ENCODE measurements at regions of chr20 and their contacts with region 1.

Region 1: GRCh38 chr20:62065669-62066338 is at the start of gene TAF4:
- DNase-seq: peak; percentile 70 to 89 (median 81)
- ATAC-seq: peak; percentile 85
- H3K4me3 ChIP-seq: peak within 1 kb of the TSS; percentile 64
- H3K4me3 Mint-ChIP-seq: peak within 1 kb of the TSS; percentile 82 to 92 (median 89)
- H3K27ac ChIP-seq: peak within 1 kb of the TSS; percentile 78
- H3K27ac Mint-ChIP-seq: peak within 1 kb of the TSS; percentile 89 to 97 (median 93)
- H3K4me1 ChIP-seq: peaks cover 23 to 29% of the 10 kb centered on the region in 2 donors
- H3K4me1 Mint-ChIP-seq: peaks cover 25 to 56% (median 50%) of the 10 kb centered on the region in 7 donors
- H3K27me3 ChIP-seq: no peaks in the 10 kb centered on the region
- H3K27me3 Mint-ChIP-seq: peaks cover 0 to 2% (median 0%) of the 10 kb centered on the region in 5 donors
- total RNA-seq, gene TAF4: 19.8 to 43.7 (median 23.7) TPM

Region 2: DNA sequence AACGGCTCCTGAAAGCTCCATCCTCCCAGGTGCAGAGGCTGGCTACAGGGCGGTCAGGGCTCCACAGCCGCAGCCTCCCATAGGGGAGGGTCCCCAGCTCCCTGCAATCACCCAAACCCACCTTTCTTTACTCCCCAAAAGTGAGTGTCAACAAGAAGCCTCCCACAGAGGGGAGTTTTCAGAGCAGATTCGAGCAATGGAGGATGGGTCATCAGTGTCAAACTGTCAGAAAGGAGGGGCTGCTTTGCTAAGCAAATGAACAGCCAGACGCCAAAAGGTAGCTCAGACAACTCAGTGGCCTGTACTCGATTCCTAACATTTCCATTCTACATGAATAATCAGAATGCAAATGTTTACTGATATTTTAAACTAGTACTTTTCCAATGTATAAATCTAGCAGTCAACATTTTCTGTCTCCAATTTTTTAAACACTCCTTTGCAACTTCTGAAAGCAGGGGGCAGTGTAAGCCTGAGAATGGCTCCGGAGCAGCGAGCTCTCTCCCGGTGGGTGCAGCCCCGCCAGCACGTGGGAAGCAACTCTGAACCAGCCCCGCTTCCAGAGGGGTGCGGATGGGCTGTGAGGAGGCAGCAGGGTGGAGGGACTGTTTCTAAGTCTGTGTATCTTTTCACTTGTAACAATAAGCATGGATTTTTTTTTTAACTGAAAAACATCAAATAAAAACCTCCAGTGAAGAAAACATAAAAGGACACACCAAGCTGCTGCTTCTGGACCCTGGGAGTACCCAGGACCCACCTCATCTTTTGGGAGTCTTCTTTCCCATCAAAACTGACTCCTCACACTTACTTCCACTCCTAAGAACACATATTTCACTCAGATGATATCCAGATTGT is 55.0 kb before region 1 on chr20:
- CTCF ChIA-PET with region 1: no interaction called
- POLR2A ChIA-PET with region 1: interaction called, 6 read pairs
- intact Hi-C with region 1: loop called (anchors 1 to 2 kb)
- DNase-seq: peak; percentile 36 to 70 (median 66)
- ATAC-seq: peak; percentile 81
- H3K4me3 ChIP-seq: no peak overlapping the region
- H3K4me3 Mint-ChIP-seq: peak overlapping the region in 1 of 10 donors; percentile 6
- H3K27ac ChIP-seq: no peak overlapping the region
- H3K27ac Mint-ChIP-seq: peak overlapping the region in 6 of 9 donors; percentile 6 to 65 (median 43)
- H3K4me1 ChIP-seq: peaks cover 0 to 4% of the 10 kb centered on the region in 2 donors
- H3K4me1 Mint-ChIP-seq: peaks cover 6 to 24% (median 10%) of the 10 kb centered on the region in 7 donors
- H3K27me3 ChIP-seq: no peaks in the 10 kb centered on the region
- H3K27me3 Mint-ChIP-seq: no peaks in the 10 kb centered on the region

Region 3: DNA sequence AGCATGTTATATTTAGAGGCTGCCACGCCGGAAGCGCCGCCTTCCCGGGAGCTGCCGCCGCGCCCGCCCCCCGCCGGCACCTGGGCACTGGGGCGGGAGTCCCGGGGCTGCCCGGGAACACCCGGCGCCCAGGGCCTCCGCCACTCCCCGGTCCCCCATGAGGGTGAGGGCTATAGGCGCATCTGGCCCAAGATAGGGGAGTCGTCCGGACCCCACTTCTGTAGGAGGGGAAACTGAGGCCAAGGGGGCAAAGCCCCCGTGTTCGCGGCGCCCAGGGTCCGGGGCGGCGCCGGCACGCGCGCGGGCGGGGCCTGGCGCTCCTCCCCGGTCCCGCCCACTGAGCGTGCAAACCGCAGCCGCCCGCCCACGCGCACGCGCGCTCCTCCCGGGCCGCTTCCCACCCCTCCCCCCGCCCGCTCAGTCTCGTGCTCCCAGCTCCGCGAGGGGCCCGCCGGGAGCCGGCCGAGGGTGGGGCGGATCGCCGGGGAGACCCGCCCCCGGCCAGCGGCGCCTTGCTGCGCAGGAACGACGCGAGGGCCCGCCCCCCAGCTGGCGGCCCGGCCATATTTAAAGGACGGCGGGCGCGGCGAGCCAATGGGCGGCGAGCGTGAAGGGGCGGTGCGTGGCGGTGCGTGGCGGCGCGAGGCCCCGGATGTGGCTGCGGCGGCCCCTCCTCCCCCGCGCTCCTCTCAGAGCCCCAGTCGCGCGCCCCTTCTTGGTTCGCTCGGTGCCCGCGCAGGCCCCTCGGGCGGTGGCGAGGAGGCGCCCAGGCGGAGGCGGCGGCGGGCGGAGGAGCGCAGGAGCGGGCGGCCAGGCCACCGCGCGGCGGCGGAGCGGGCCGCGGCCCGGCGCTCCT is 56.2 kb after region 1 on chr20 and contains the start of gene LSM14B:
- CTCF ChIA-PET with region 1: interaction called, 12 read pairs
- POLR2A ChIA-PET with region 1: interaction called, 109 read pairs
- intact Hi-C with region 1: loop called (anchors 1 kb)
- DNase-seq: peak; percentile 94 to 99 (median 96)
- ATAC-seq: peak; percentile 91
- H3K4me3 ChIP-seq: peak within 1 kb of the TSS; percentile 77
- H3K4me3 Mint-ChIP-seq: peak within 1 kb of the TSS; percentile 86 to 96 (median 92)
- H3K27ac ChIP-seq: peak within 1 kb of the TSS; percentile 81
- H3K27ac Mint-ChIP-seq: peak within 1 kb of the TSS; percentile 84 to 97 (median 95)
- H3K4me1 ChIP-seq: peaks cover 33 to 39% of the 10 kb centered on the region in 2 donors
- H3K4me1 Mint-ChIP-seq: peaks cover 42 to 71% (median 59%) of the 10 kb centered on the region in 7 donors
- H3K27me3 ChIP-seq: no peaks in the 10 kb centered on the region
- H3K27me3 Mint-ChIP-seq: no peaks in the 10 kb centered on the region
- total RNA-seq, gene LSM14B: 39.5 to 61.5 (median 41.9) TPM

Region 4: GRCh38 chr20:62143118-62143973 is 77.5 kb after region 1 on chr20 and contains the starts of genes PSMA7 and SS18L1:
- CTCF ChIA-PET with region 1: no interaction called
- POLR2A ChIA-PET with region 1: interaction called, 43 read pairs
- intact Hi-C with region 1: loop called (anchors 1 to 2 kb)
- DNase-seq: peak; percentile 79 to 90 (median 87)
- ATAC-seq: peak; percentile 91
- H3K4me3 ChIP-seq: peak within 1 kb of the TSS; percentile 65
- H3K4me3 Mint-ChIP-seq: peak within 1 kb of the TSS; percentile 89 to 98 (median 92)
- H3K27ac ChIP-seq: peak within 1 kb of the TSS; percentile 75
- H3K27ac Mint-ChIP-seq: peak within 1 kb of the TSS; percentile 80 to 97 (median 93)
- H3K4me1 ChIP-seq: peaks cover 28 to 36% of the 10 kb centered on the region in 2 donors
- H3K4me1 Mint-ChIP-seq: peaks cover 36 to 64% (median 55%) of the 10 kb centered on the region in 7 donors
- H3K27me3 ChIP-seq: no peaks in the 10 kb centered on the region
- H3K27me3 Mint-ChIP-seq: no peaks in the 10 kb centered on the region
- total RNA-seq, gene PSMA7: 125 to 301 (median 165) TPM
- total RNA-seq, gene SS18L1: 17.8 to 26.7 (median 22.6) TPM

Region 5: DNA sequence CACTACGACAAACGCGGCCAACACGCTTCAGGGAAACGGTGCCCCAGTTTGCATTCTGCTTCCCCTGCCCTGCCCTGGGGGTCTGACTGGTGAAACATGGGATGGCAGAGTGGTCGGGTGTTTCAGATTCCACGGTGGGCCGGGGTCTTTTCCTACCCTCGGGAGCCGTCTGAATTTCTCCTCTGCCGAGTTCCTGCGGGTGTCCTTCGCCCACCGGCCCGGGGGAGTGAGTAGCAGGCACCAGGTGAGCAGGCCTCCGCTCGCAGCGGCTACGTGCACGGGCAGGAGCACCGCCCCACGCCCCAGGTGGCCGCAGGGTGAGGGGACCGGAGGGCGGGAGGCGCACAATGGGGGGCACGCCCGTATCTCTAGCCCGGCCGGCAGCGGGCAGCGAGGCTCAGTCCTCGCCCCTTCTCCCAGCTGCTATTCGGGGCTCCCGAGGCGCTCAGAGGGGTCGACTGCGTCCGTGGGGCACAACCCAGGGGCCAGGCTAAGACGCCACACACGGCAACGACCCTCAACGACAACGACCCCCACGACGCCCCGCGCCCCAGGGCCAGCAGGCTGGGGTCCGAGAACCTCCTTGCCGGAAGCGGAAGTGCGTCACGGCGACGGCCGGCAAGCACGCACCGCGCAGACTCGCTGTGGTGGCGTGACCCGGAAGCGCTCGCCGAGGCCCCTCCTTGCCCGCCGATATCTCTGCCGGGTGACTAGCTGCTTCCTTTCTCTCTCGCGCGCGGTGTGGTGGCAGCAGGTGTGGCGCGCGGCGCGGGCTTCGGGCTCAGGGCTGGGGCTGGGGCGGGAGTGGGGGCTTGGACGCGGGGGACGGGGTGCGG is 320.8 kb after region 1 on chr20 and contains the start of gene RPS21:
- CTCF ChIA-PET with region 1: no interaction called
- POLR2A ChIA-PET with region 1: no interaction called
- intact Hi-C with region 1: loop called in 1 of 2 experiments (anchors 10 kb)
- DNase-seq: peak; percentile 89 to 95 (median 92)
- ATAC-seq: peak; percentile 95
- H3K4me3 ChIP-seq: peak within 1 kb of the TSS; percentile 94
- H3K4me3 Mint-ChIP-seq: peak within 1 kb of the TSS; percentile 90 to 96 (median 92)
- H3K27ac ChIP-seq: peak within 1 kb of the TSS; percentile 98
- H3K27ac Mint-ChIP-seq: peak within 1 kb of the TSS; percentile 89 to 96 (median 93)
- H3K4me1 ChIP-seq: peaks cover 24 to 28% of the 10 kb centered on the region in 2 donors
- H3K4me1 Mint-ChIP-seq: peaks cover 40 to 59% (median 50%) of the 10 kb centered on the region in 7 donors
- H3K27me3 ChIP-seq: no peaks in the 10 kb centered on the region
- H3K27me3 Mint-ChIP-seq: no peaks in the 10 kb centered on the region
- total RNA-seq, gene RPS21: 2,026 to 3,407 (median 3,308) TPM